Natural killer cell (primary cell): ENCODE measurements at regions of chr7 and their contacts with region 1.

Region 1: GRCh38 chr7:73851410-73852234 is 9.3 kb upstream of the METTL27 start:
- DNase-seq: peak in 1 of 2 donors; percentile 40
- ATAC-seq: peak; percentile 52 to 75 (median 63)
- H3K4me3 ChIP-seq: no peak overlapping the region
- H3K4me3 Mint-ChIP-seq: no peak overlapping the region
- H3K27ac ChIP-seq: no peak overlapping the region
- H3K27ac Mint-ChIP-seq: no peak overlapping the region
- H3K4me1 ChIP-seq: peaks cover 8% of the 10 kb centered on the region
- H3K4me1 Mint-ChIP-seq: peaks cover 4 to 7% of the 10 kb centered on the region in 2 donors
- H3K27me3 ChIP-seq: no peaks in the 10 kb centered on the region
- H3K27me3 Mint-ChIP-seq: peaks cover 12 to 19% of the 10 kb centered on the region in 2 donors
- CTCF ChIP-seq: no peak

Region 2: GRCh38 chr7:73606801-73607691 is 244.6 kb before region 1 on chr7:
- intact Hi-C with region 1: loop called (anchors 1 kb)
- DNase-seq: peak; percentile 70 to 82
- ATAC-seq: peak; percentile 69 to 90 (median 88)
- H3K4me3 ChIP-seq: no peak overlapping the region
- H3K4me3 Mint-ChIP-seq: no peak overlapping the region
- H3K27ac ChIP-seq: no peak overlapping the region
- H3K27ac Mint-ChIP-seq: no peak overlapping the region
- H3K4me1 ChIP-seq: peaks cover 7% of the 10 kb centered on the region
- H3K4me1 Mint-ChIP-seq: no peaks in the 10 kb centered on the region
- H3K27me3 ChIP-seq: peaks cover 14% of the 10 kb centered on the region
- H3K27me3 Mint-ChIP-seq: peaks cover 12 to 29% of the 10 kb centered on the region in 2 donors
- CTCF ChIP-seq: peak; percentile 91

Region 3: DNA sequence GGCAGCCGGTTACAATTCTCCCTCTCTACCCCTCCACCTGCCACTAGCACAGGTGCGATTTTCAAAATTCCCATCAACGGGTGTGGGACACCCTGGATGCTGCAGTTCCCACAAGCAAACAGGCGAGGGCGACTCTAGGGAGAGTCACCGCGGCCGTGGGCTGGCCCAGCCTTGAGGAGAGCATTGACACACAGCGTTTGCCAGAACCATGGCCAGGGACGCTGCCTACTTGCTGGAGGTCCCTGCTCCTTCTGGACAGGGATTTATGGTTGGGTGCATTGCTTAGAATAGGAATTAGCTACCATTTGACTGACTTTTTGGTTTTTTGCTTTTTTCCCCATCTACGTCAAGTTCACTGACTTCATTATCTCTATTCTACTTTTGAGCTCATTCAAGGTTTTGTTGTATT is 39.9 kb before region 1 on chr7:
- intact Hi-C with region 1: loop called (anchors 1 kb)
- DNase-seq: peak; percentile 33 to 68
- ATAC-seq: peak; percentile 71 to 89 (median 85)
- H3K4me3 ChIP-seq: no peak overlapping the region
- H3K4me3 Mint-ChIP-seq: no peak overlapping the region
- H3K27ac ChIP-seq: no peak overlapping the region
- H3K27ac Mint-ChIP-seq: no peak overlapping the region
- H3K4me1 ChIP-seq: no peaks in the 10 kb centered on the region
- H3K4me1 Mint-ChIP-seq: no peaks in the 10 kb centered on the region
- H3K27me3 ChIP-seq: no peaks in the 10 kb centered on the region
- H3K27me3 Mint-ChIP-seq: peaks cover 0 to 3% of the 10 kb centered on the region in 2 donors
- CTCF ChIP-seq: peak; percentile 64